PC-9 (cell line): ENCODE measurements at regions of chr10 and their contacts with region 1.

Region 1: DNA sequence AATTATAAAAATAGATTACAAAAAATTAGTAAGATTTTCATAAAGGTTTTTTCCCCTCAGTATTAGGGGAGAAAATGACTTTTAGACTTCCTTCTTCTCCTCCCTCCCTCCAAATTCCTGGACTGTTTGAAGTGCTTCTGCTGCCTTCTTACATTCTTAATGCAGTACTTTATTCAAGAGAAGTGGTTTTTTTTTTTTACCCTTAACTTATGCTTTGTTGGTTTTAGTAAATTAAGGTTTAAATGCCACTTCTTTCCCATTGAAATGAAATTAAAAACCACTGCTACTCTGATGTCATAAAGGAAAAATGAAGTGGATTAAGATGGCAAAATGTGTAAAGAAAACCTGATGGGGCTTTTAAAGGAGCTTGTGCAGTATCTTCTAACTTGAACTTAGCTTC is 140.7 kb downstream of the VTI1A start:
- DNase-seq: no peak
- H3K4me3 ChIP-seq: no peak overlapping the region
- H3K27ac ChIP-seq: no peak overlapping the region
- H3K4me1 ChIP-seq: no peaks in the 10 kb centered on the region
- H3K27me3 ChIP-seq: no peaks in the 10 kb centered on the region
- CTCF ChIP-seq: no peak

Region 2: GRCh38 chr10:112605063-112605462 is 17.3 kb after region 1 on chr10:
- CTCF ChIA-PET with region 1: no interaction called
- POLR2A ChIA-PET with region 1: no interaction called
- intact Hi-C with region 1: no loop called
- DNase-seq: no peak
- H3K4me3 ChIP-seq: no peak overlapping the region
- H3K27ac ChIP-seq: no peak overlapping the region
- H3K4me1 ChIP-seq: no peaks in the 10 kb centered on the region
- H3K27me3 ChIP-seq: no peaks in the 10 kb centered on the region
- CTCF ChIP-seq: no peak

Region 3: GRCh38 chr10:112650588-112651030 is 62.9 kb after region 1 on chr10:
- CTCF ChIA-PET with region 1: no interaction called
- POLR2A ChIA-PET with region 1: interaction called, 10 read pairs
- intact Hi-C with region 1: no loop called
- DNase-seq: peak in 1 of 2 experiments; percentile 70
- H3K4me3 ChIP-seq: no peak overlapping the region
- H3K27ac ChIP-seq: peak overlapping the region; percentile 23; the same call in 1 of the 2 replicates
- H3K4me1 ChIP-seq: peaks cover 22% of the 10 kb centered on the region
- H3K27me3 ChIP-seq: no peaks in the 10 kb centered on the region
- CTCF ChIP-seq: no peak

Region 4: GRCh38 chr10:112852306-112852705 is 264.6 kb after region 1 on chr10:
- CTCF ChIA-PET with region 1: no interaction called
- POLR2A ChIA-PET with region 1: no interaction called
- intact Hi-C with region 1: no loop called
- DNase-seq: no peak
- H3K4me3 ChIP-seq: no peak overlapping the region
- H3K27ac ChIP-seq: no peak overlapping the region
- H3K4me1 ChIP-seq: 0 out of 2 replicates have a peak, but pooled peaks cover 7% of the 10 kb centered on the region
- H3K27me3 ChIP-seq: no peaks in the 10 kb centered on the region
- CTCF ChIP-seq: no peak

Region 5: GRCh38 chr10:113187063-113187777 is 599.5 kb after region 1 on chr10:
- CTCF ChIA-PET with region 1: interaction called, 15 read pairs
- POLR2A ChIA-PET with region 1: no interaction called
- intact Hi-C with region 1: no loop called
- DNase-seq: no peak
- H3K4me3 ChIP-seq: no peak overlapping the region
- H3K27ac ChIP-seq: no peak overlapping the region
- H3K4me1 ChIP-seq: no peaks in the 10 kb centered on the region
- H3K27me3 ChIP-seq: no peaks in the 10 kb centered on the region
- CTCF ChIP-seq: no peak